Dorsolateral prefrontal cortex (tissue), 120 donors: ENCODE measurements at regions of chr12 and their contacts with region 1.

Region 1: DNA sequence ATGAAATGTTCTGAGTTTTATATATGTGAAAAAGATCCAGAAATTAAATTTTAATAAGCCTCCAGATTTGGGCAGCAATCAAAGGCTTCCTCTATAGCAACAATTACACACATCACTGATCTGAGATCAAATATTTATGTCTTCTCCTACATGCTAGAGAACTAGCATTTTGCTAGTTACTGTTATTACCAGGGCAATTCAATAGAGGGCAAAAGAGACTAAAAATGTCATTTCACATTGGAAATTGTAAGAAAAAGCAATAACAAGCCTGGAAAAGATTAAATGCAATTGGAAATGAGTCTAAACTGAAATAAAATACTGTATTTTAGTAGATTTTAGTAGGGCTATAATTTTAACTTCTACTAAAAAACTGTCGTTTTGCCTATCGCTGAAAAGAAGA is 32.6 kb upstream of the ANO6 start:
- DNase-seq: no peak
- H3K4me3 ChIP-seq: no peak overlapping the region
- H3K27ac ChIP-seq: no peak overlapping the region
- H3K27me3 ChIP-seq: no peaks in the 10 kb centered on the region
- CTCF ChIP-seq: peak in 44 of 56 donors; percentile 14 to 61 (median 40)

Region 2: GRCh38 chr12:45388545-45388944 is 205.3 kb after region 1 on chr12:
- intact Hi-C with region 1: loop called in 1 of 2 experiments (anchors 10 kb)
- DNase-seq: no peak
- H3K4me3 ChIP-seq: no peak overlapping the region
- H3K27ac ChIP-seq: no peak overlapping the region
- H3K27me3 ChIP-seq: no peaks in the 10 kb centered on the region
- CTCF ChIP-seq: peak in 54 of 56 donors; percentile 26 to 73 (median 48)